Calu3 (cell line): ENCODE measurements at regions of chr10 and their contacts with region 1.

Region 1: GRCh38 chr10:52488606-52489485 is 174.8 kb downstream of the DKK1 start:
- DNase-seq: peak; percentile 24
- H3K4me3 Mint-ChIP-seq: no peak overlapping the region
- H3K27ac Mint-ChIP-seq: peak overlapping the region; percentile 85
- H3K4me1 Mint-ChIP-seq: peaks cover 49% of the 10 kb centered on the region
- H3K27me3 Mint-ChIP-seq: no peaks in the 10 kb centered on the region
- CTCF ChIP-seq: peak; percentile 48

Region 2: GRCh38 chr10:52334595-52334994 is 154.3 kb before region 1 on chr10:
- CTCF ChIA-PET with region 1: interaction called, 3 read pairs
- intact Hi-C with region 1: loop called (anchors 1 kb)
- DNase-seq: no peak
- H3K4me3 Mint-ChIP-seq: no peak overlapping the region
- H3K27ac Mint-ChIP-seq: peak overlapping the region; percentile 82
- H3K4me1 Mint-ChIP-seq: peaks cover 41% of the 10 kb centered on the region
- H3K27me3 Mint-ChIP-seq: no peaks in the 10 kb centered on the region
- CTCF ChIP-seq: no peak

Region 3: GRCh38 chr10:52390388-52390787 is 98.5 kb before region 1 on chr10:
- CTCF ChIA-PET with region 1: no interaction called
- intact Hi-C with region 1: loop called (anchors 5 kb)
- DNase-seq: no peak
- H3K4me3 Mint-ChIP-seq: no peak overlapping the region
- H3K27ac Mint-ChIP-seq: no peak overlapping the region
- H3K4me1 Mint-ChIP-seq: peaks cover 45% of the 10 kb centered on the region
- H3K27me3 Mint-ChIP-seq: no peaks in the 10 kb centered on the region
- CTCF ChIP-seq: no peak

Region 4: GRCh38 chr10:52566471-52567246 is 77.8 kb after region 1 on chr10:
- CTCF ChIA-PET with region 1: no interaction called
- intact Hi-C with region 1: loop called (anchors 2 kb)
- DNase-seq: peak; percentile 45
- H3K4me3 Mint-ChIP-seq: no peak overlapping the region
- H3K27ac Mint-ChIP-seq: no peak overlapping the region
- H3K4me1 Mint-ChIP-seq: peaks cover 9% of the 10 kb centered on the region
- H3K27me3 Mint-ChIP-seq: no peaks in the 10 kb centered on the region
- CTCF ChIP-seq: peak; percentile 66